HEK293 (cell line): ENCODE measurements at regions of chr10 and their contacts with region 1.

Region 1: GRCh38 chr10:123897146-123897545 is 5.5 kb upstream of the CPXM2 start:
- H3K4me3 ChIP-seq: no peak overlapping the region
- H3K27ac ChIP-seq: no peak overlapping the region
- H3K4me1 ChIP-seq: no peaks in the 10 kb centered on the region
- CTCF ChIP-seq: no peak

Region 2: GRCh38 chr10:123886292-123886691 is 10.9 kb before region 1 on chr10:
- CTCF ChIA-PET with region 1: no interaction called
- POLR2A ChIA-PET with region 1: no interaction called
- H3K4me3 ChIP-seq: no peak overlapping the region
- H3K27ac ChIP-seq: no peak overlapping the region
- H3K4me1 ChIP-seq: no peaks in the 10 kb centered on the region
- CTCF ChIP-seq: no peak

Region 3: GRCh38 chr10:123909426-123909825 is 12.3 kb after region 1 on chr10:
- CTCF ChIA-PET with region 1: interaction called, 12 read pairs
- POLR2A ChIA-PET with region 1: no interaction called
- H3K4me3 ChIP-seq: no peak overlapping the region
- H3K27ac ChIP-seq: no peak overlapping the region
- H3K4me1 ChIP-seq: peaks cover 8% of the 10 kb centered on the region; the same call in 1 of the 2 replicates
- CTCF ChIP-seq: no peak

Region 4: DNA sequence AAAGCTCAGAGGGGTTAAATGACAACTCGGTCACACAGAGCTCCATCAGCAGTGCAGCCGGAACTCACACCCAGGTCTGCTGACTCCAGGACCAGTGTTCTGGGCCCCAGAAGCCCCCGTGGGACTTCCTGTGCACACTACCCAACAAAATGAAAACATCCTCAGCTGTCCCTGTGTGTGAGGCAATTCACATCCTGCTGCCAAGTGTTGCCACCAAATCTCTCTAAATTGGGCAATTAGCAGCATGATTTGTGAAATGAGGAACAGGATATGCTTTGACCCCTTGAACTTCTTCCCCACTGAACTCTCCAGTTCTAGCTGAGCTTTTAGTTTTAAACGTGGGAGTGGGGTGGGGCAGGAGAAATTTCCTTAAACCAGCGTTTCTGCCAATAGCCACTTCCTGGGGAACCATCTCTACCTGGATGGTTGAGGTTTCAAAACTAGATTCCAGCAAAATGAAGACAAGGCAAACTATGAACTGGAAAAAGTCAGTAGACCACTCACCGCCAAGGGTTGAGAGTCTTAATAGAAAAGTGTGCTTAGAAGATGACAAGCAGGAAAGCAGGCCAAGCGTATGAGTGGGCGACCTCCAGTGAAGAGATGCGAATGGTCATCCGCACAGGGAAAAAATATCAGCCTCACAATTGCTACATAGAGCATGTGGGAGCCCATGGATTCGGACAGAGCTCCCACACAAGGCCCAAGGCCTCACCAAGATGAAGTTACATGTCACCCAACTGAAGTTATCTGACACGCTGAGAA is 248.1 kb after region 1 on chr10:
- CTCF ChIA-PET with region 1: no interaction called
- POLR2A ChIA-PET with region 1: no interaction called
- H3K4me3 ChIP-seq: no peak overlapping the region
- H3K27ac ChIP-seq: no peak overlapping the region
- H3K4me1 ChIP-seq: no peaks in the 10 kb centered on the region
- CTCF ChIP-seq: no peak